Right ventricle myocardium inferior (tissue), 1 donor: ENCODE measurements at regions of chr18 and their contacts with region 1.

Region 1: DNA sequence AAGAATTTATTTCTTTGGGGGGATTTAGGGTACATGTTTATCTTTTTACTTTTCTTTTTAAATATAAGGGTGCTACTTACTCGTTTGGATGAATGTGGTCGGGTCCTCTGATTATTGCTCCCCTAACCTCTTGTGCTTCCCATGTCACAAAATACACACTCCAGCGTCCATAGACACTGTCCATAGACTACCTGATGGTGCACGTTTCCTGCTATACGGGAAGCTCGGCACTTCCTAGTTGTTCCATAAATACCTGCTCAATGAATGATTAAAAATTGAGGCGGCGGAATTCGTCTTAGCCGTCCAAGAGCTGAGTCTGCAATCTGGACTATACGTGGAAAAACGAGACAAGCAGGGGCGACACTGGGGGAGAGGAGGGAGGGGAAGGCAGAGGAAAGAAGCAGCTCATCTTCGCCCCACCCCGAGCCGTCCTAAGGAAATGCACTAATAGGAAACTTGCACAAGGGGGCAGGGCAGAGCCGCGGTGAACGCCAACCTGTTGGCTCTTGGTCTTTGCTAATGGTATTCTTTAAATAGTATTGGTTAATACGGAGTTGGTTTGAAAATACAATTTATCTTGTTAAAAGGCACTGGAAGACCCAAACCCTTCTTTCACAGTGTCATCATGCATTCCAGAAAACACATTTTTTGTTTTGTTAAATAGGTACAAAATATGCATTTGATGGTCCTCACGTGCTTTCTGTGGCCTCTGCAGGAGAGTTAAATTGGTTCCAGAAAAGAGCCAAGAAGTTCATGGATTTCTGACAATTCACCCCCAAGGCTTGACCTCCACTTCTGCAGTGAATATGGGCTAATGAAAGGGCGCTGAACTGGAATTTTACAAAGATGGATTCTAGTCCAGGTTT is 73.0 kb upstream of the KCTD1 start:
- DNase-seq: no peak
- ATAC-seq: peak; percentile 81

Region 2: DNA sequence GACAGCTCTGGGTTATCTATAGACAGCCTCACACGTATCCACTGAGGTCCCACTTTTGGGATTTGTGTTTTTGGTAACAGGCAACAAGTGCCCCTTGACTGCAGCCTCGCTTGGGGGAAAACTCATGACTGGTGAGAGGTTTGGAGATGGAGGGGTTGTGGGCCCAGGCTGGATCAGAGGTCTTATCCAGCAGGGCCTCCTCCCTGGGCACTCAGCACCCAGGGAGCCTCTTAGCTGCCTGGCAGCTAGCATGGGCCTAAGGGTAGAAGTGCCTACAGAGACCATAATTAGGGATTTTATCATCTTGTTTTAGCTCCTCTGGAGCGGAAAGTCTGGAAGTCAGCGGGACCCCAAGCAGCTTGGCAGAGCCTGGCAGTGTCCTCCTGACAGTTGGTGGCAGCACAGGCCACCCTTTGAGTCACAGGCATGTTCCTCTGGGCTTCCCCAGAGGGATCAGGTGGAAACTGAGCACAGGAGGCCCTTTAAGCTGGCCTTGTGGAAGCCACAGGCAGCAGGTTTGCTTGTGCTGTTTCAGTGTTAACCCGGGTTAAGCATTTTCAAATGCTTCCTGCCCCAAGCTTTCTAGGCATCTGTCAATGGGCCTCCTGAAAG is 216.1 kb before region 1 on chr18:
- intact Hi-C with region 1: loop called (anchors 5 kb)
- DNase-seq: no peak
- ATAC-seq: peak; percentile 86

Region 3: DNA sequence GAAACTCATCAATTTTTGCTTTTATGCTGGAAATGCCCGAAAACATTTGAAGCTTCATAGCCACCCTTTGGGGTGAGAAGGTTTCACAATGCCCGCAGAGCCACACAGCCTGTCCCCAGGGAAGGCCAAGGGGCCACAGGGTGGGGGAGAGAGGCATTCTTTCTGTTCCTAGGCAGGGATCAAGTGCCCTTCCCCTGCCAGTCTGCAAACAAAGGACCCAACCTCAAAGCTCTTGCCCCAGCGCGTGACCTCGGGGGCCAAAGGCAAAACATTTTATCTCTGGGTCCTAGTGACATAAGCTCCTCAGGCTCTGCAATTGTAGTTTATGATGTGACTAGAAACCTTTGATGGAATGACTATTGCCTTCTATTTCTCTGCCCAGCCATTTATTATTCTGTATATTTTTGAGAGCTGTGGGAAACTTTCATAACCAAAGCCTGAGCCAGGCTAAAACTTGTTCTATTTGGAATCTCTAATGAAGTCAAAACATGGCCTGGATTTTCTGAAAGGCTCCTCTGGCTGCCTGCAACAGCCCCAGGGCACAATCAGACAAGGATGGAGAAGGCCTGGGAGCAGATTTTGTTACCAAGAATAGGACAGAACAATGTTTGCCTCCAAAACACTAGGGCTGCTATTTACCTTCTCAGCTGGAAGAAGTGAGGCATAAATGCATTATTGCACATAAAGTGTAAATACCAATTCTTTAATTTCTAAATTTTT is 64.2 kb after region 1 on chr18:
- intact Hi-C with region 1: loop called (anchors 10 kb)
- DNase-seq: no peak
- ATAC-seq: peak; percentile 54

Region 4: DNA sequence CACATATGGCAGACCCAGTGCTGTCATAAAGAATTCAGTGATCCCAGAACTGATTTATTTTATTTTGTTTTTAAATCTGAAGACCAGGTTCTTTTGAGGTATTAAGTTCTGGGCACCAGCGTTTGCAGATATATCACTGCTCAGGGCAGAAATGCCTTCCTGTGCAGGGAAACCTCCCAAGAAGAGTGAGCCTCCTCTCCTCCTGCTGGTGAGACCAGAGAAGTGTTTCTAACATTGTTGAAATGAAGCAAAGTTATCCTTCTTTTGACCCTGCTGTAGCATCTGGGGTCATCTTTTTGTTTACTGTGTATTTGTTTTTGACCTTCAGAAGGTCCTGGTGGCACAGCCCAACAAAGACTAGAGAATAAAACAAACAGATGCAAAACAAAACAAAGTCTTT is 150.1 kb after region 1 on chr18:
- intact Hi-C with region 1: loop called (anchors 1 kb)
- DNase-seq: no peak
- ATAC-seq: no peak